ENCODE measurements at regions of chr13 and their contacts with region 1.

Region 1: DNA sequence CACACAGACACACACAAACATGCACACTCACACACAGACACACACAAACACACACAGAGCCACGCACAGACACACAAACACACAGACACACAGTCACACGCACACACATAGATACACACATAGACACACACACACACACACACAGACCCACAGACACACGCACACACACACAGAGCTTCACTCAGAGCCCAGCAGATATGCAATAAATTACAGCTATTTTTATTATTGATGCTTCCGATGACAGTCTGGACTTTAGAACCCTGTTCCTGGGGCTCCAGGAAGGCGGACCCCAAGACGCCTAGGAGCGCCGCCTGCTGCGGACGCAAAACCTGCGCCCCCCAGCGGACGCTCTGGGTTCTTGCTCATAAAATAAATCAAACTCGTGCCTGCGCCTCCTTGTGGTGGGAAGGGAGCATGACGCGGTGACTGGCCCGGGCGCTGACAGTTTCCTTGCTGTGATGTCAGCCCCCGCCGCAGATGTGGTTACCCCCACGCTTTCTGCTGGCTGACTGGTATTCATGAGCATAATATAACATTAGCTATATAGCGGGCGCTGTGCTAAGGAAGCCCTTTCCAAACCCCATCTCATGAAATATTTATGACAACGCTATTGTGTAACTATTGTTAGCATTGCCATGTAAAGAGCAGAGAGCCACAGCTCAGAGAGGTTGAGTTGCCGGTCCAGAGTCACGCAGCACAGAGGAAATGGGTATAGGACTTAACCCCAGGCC is 64.4 kb upstream of the TM9SF2 start:
- DNase-seq: peak; percentile 91
- H3K4me3 ChIP-seq: peak overlapping the region; percentile 12
- H3K27ac ChIP-seq: no peak overlapping the region
- H3K4me1 ChIP-seq: no peaks in the 10 kb centered on the region
- H3K27me3 ChIP-seq: no peaks in the 10 kb centered on the region
- CTCF ChIP-seq: peak; percentile 100

Region 2: DNA sequence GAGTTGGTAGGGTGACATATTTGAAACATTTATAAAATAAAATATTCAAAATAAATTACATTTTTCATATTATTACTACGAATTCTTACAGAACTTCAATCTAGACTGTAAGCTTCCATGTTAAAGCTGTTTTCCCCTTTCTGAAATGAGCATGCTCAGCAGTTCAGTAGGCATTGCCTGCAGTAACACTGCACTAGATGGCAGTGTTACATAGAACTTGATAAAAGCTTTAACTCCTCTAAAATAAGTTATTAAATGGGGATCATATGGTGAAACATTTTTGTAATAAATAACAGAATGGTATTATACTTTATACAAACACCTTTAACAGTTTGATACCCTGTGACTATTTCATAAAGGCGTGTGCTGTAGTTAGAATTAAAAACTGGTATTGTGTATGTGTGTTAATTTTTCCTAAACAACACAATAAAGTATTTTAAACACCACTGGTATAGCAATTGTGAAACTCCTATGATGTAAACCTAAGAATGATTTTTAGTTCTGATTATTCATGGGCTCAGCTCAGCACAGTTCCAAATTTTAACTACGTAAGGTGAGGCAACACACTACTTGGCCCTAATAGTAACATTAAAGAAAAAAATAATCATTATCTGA is 167.1 kb before region 1 on chr13:
- CTCF ChIA-PET with region 1: interaction called, 21 read pairs
- POLR2A ChIA-PET with region 1: no interaction called
- intact Hi-C with region 1: loop called (anchors 1 kb)
- DNase-seq: peak; percentile 51
- H3K4me3 ChIP-seq: no peak overlapping the region
- H3K27ac ChIP-seq: no peak overlapping the region
- H3K4me1 ChIP-seq: no peaks in the 10 kb centered on the region
- H3K27me3 ChIP-seq: no peaks in the 10 kb centered on the region
- CTCF ChIP-seq: peak; percentile 68

Region 3: GRCh38 chr13:99386911-99387788 is 49.7 kb before region 1 on chr13:
- CTCF ChIA-PET with region 1: interaction called, 3 read pairs
- POLR2A ChIA-PET with region 1: no interaction called
- intact Hi-C with region 1: loop called (anchors 2 kb)
- DNase-seq: peak; percentile 64
- H3K4me3 ChIP-seq: no peak overlapping the region
- H3K27ac ChIP-seq: no peak overlapping the region
- H3K4me1 ChIP-seq: no peaks in the 10 kb centered on the region
- H3K27me3 ChIP-seq: no peaks in the 10 kb centered on the region
- CTCF ChIP-seq: peak; percentile 87

Measured in A673 (cell line).